HEK293 (cell line): ENCODE measurements at regions of chr17 and their contacts with region 1.

Region 1: DNA sequence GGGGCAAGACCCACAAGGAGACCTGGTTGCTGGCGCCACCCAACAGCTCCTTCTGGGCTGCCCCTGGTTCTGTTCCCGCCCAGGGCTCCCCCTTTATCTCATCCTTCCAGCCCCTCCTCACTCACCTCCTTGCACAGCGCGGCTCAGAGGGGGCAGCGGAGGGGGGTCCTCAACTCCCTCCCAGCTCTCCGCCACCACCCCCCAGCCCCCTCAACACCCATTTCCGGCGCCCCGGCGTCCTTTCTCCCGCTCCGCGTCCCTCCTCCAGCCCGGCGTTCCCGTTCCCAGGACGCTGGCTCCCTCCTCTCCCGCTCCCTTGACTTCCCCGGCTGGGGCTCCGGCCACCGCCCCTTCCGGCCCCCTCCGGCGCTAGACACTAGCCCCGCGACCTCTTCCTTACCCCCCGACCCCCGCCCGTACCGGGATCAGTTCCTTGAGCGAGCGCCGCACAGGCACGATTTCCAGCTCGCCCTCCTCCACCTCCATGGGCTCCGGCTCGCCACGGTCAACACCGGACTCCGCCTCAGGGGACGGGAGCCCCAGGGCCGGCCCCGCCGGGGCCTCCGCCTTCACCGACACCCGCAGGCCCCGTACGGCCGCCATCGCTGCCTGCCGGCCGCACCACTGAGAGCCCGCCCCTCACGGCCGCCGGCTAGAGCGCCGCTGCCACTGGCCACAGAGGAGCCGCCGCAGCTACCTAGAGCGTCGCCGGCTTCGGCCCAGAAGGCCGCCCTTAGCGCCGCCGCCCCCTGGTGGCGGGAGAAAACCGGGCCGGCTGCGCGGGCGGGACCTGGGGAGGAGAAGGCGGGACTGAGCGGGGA is at the start of gene NCBP3:
- H3K4me3 ChIP-seq: peak within 1 kb of the TSS; percentile 96
- H3K27ac ChIP-seq: peak within 1 kb of the TSS; percentile 84
- H3K4me1 ChIP-seq: peaks cover 6% of the 10 kb centered on the region
- CTCF ChIP-seq: peak; percentile 97

Region 2: DNA sequence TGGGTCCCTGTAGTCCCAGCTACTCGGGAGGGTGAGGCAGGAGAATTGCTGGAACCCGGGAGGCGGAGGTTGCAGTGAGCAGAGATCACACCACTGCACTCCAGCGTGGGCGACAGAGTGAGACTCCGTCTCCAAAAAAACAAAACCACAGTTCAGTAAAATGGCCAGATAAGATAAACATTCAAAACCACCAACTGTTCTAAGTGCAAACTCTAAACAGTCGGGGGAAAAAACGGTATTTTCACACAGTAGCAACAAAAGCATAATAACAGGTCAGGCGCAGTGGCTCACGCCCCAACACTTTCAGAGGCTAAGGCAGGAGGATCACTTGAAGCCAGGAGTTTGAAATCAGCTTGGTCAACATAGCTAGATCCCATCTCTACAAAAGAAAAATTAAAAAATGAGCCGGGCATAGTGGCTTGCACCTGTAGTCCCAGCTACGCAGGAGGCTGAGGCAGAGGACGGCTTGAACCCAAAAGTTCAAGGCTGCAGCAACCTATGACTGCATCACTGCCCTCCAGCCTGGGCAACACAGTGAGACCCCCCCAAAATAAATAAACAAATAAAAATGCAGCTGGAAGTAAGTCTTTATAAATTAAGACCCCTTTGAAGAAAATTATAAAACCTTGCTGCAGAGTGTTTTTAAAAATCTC is 132.9 kb before region 1 on chr17:
- CTCF ChIA-PET with region 1: no interaction called
- POLR2A ChIA-PET with region 1: no interaction called
- H3K4me3 ChIP-seq: no peak overlapping the region
- H3K27ac ChIP-seq: no peak overlapping the region
- H3K4me1 ChIP-seq: no peaks in the 10 kb centered on the region; the same call in 1 of the 2 replicates
- CTCF ChIP-seq: no peak

Region 3: DNA sequence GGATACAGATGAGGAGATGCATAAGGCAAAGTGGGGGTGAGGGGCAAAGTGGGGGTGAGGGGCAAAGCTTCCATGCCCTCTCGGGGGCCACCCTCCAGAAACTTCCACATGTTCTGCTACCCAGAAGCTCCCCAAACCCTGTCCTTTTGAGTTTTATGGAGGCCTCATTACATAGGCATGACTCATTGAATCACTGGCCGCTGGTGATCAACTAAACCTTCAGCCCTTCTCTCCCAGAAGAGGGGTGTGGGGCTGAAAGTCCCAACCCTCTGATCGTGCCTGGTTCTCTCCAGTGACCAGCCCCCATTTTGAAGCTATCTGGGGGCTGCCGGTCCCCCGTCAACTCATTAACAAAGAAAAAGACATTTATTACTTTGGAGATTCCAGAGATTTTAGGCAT is 72.3 kb before region 1 on chr17:
- CTCF ChIA-PET with region 1: interaction called, 10 read pairs
- POLR2A ChIA-PET with region 1: no interaction called
- H3K4me3 ChIP-seq: no peak overlapping the region
- H3K27ac ChIP-seq: no peak overlapping the region
- H3K4me1 ChIP-seq: no peaks in the 10 kb centered on the region
- CTCF ChIP-seq: no peak

Region 4: GRCh38 chr17:3796110-3796821 is 49.6 kb before region 1 on chr17:
- CTCF ChIA-PET with region 1: no interaction called
- POLR2A ChIA-PET with region 1: no interaction called
- H3K4me3 ChIP-seq: no peak overlapping the region
- H3K27ac ChIP-seq: no peak overlapping the region
- H3K4me1 ChIP-seq: no peaks in the 10 kb centered on the region
- CTCF ChIP-seq: no peak

Region 5: DNA sequence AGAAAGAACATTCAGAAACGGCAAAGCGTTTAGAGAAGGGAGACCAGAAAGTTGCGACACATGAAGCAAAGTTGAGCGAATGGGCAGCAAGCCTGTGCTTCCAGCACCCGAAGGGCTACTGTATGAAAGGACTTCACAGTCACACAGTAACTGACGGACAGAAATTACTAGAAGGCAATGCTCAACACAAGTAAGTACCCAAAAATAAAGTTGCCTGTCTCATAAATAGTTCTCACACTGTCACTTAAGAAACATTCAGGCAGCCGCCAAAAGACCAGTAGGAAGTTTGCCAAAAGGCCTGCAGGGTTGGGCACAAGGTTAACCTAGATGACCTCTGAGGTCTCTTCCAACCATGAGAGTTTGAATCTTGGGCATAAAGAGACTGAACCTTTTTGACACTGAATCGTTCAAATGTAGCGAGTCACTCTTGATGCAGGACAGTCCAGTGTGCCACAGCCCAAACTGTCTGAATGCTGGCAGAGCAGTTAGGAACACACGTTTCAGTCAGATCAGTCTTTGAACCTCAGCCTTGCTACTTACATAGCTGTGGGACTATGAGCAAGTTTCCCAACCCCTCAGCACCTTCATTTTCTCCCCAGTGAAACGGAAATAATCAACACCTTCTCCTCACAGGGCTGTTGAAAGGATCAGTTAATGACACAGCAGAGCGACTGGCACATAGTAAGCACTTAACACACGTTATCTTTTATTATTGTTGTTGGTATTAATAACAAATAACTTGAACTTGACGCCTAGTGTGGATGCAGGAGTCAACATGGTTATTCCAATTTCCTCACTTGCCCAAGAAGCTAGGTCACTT is 10.2 kb before region 1 on chr17:
- CTCF ChIA-PET with region 1: interaction called, 86 read pairs
- POLR2A ChIA-PET with region 1: interaction called, 3 read pairs
- H3K4me3 ChIP-seq: no peak overlapping the region
- H3K27ac ChIP-seq: no peak overlapping the region
- H3K4me1 ChIP-seq: no peaks in the 10 kb centered on the region
- CTCF ChIP-seq: no peak

Region 6: DNA sequence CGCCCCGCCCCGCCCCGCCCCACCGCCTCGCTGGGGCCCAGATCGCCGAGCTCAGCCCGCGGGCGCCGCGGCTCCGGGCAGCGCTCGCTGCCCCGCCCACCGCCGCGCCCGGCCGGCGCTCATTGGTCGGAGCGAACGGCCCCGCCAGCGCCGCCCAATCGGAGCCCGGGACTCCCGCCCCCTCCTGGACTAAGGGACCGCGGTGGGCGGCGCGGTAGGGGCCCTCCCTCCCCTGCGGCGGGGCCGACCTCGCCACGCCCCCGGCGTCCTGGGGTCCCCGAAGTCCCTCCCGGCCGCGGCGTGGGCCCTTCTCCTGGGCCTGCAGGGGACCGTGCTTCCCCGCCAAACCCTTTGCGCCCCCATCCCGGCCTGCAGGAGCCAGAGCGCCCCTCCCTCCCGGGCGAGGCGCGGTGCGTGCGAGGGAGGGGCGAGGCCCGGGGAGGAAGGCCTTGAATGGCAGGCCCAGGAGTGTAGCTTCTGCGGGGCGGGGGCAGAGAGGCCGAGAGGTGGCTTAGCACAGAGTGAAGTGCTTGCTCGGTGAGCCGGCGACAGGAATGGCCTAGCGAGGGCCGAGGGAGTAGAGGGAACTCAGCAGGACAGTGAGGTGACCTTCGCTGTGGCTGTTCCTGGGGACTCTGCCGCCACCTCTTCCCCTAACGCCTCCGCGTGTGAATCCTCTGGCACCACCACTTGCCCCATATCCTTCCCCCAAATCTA is 47.3 kb after region 1 on chr17 and contains the start of gene CAMKK1:
- CTCF ChIA-PET with region 1: interaction called, 13 read pairs
- POLR2A ChIA-PET with region 1: interaction called, 13 read pairs
- H3K4me3 ChIP-seq: peak within 1 kb of the TSS; percentile 56
- H3K27ac ChIP-seq: peak within 1 kb of the TSS; percentile 90
- H3K4me1 ChIP-seq: peaks cover 38% of the 10 kb centered on the region
- CTCF ChIP-seq: peak; percentile 30; the same call in 1 of the 2 replicates

Region 7: GRCh38 chr17:3913531-3914311 is 67.9 kb after region 1 on chr17:
- CTCF ChIA-PET with region 1: interaction called, 20 read pairs
- POLR2A ChIA-PET with region 1: no interaction called
- H3K4me3 ChIP-seq: no peak overlapping the region
- H3K27ac ChIP-seq: no peak overlapping the region
- H3K4me1 ChIP-seq: peaks cover 2% of the 10 kb centered on the region; the same call in 1 of the 2 replicates
- CTCF ChIP-seq: peak; percentile 90

Region 8: DNA sequence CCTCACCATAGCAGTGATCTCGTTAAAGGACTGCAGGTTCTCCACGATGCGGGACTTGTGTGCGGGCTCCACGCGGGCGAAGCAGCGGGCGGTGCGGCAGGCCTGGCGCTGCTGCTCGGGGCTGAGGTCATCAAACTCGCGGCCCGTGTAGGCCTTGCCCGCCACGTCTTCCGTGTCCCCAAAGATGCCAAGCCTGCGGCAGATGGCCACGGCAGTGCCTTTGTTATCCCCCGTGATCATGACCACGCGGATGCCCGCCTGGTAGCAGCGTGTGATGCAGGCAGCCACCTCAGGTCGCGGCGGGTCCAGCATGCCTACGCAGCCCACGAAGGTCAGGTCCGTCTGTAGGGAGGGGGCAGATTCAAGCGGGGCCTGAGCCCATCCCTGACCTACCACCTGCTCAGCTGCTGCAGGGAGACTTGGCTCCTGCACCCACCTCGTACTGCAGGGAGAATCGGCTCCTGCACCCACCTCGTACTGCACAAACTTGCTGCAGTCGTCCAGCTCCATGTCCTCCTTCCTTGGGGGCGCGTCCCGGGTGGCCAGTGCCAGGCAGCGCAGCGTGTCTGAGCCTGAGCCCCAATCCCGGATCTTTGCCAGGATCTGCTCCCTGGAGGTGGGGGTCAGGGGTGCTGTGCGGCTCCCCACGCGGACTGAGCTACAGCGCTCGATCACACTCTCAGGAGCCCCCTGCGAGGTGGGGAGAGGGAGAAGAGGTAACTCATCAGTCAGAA is 95.3 kb after region 1 on chr17:
- CTCF ChIA-PET with region 1: no interaction called
- POLR2A ChIA-PET with region 1: no interaction called
- H3K4me3 ChIP-seq: no peak overlapping the region
- H3K27ac ChIP-seq: no peak overlapping the region
- H3K4me1 ChIP-seq: peaks cover 3% of the 10 kb centered on the region; the same call in 1 of the 2 replicates
- CTCF ChIP-seq: no peak

Region 9: GRCh38 chr17:4074831-4075495 is 229.1 kb after region 1 on chr17:
- CTCF ChIA-PET with region 1: interaction called, 25 read pairs
- POLR2A ChIA-PET with region 1: interaction called, 3 read pairs
- H3K4me3 ChIP-seq: no peak overlapping the region
- H3K27ac ChIP-seq: no peak overlapping the region
- H3K4me1 ChIP-seq: no peaks in the 10 kb centered on the region
- CTCF ChIP-seq: 0 out of 2 replicates have a peak, but pooled peaks have one; percentile 38